ENCODE measurements at regions of chr10 and their contacts with region 1.

Region 1: GRCh38 chr10:47071891-47072290 is 160.7 kb downstream of the PTPN20 start:
- DNase-seq: no peak
- ATAC-seq: no peak
- H3K4me3 ChIP-seq: no peak overlapping the region
- H3K27ac ChIP-seq: no peak overlapping the region
- H3K4me1 ChIP-seq: no peaks in the 10 kb centered on the region
- H3K27me3 ChIP-seq: peaks cover 0 to 6% (median 0%) of the 10 kb centered on the region in 9 donors
- CTCF ChIP-seq: no peak
- POLR2A ChIP-seq: no peak

Region 2: GRCh38 chr10:47139121-47139520 is 67.2 kb after region 1 on chr10:
- intact Hi-C with region 1: loop called in 1 of 10 experiments (anchors 2 kb)
- DNase-seq: no peak
- ATAC-seq: no peak
- H3K4me3 ChIP-seq: no peak overlapping the region
- H3K27ac ChIP-seq: no peak overlapping the region
- H3K4me1 ChIP-seq: no peaks in the 10 kb centered on the region
- H3K27me3 ChIP-seq: peaks cover 0 to 2% (median 0%) of the 10 kb centered on the region in 9 donors
- CTCF ChIP-seq: no peak
- POLR2A ChIP-seq: no peak

Region 3: GRCh38 chr10:47195274-47195885 is 123.5 kb after region 1 on chr10:
- intact Hi-C with region 1: no loop called
- DNase-seq: no peak
- ATAC-seq: no peak
- H3K4me3 ChIP-seq: no peak overlapping the region
- H3K27ac ChIP-seq: no peak overlapping the region
- H3K4me1 ChIP-seq: no peaks in the 10 kb centered on the region
- H3K27me3 ChIP-seq: no peaks in the 10 kb centered on the region
- CTCF ChIP-seq: no peak
- POLR2A ChIP-seq: no peak